ENCODE measurements at regions of chr4 and their contacts with region 1.

Region 1: GRCh38 chr4:169810325-169811323 is 52.9 kb upstream of the HPF1 start:
- DNase-seq: no peak
- H3K4me3 ChIP-seq: no peak overlapping the region
- H3K27ac ChIP-seq: peak overlapping the region in 1 of 8 donors; percentile 14
- H3K4me1 ChIP-seq: peaks cover 0 to 6% (median 0%) of the 10 kb centered on the region in 6 donors
- H3K27me3 ChIP-seq: no peaks in the 10 kb centered on the region
- CTCF ChIP-seq: peak; percentile 56 to 88 (median 80)
- POLR2A ChIP-seq: no peak

Region 2: DNA sequence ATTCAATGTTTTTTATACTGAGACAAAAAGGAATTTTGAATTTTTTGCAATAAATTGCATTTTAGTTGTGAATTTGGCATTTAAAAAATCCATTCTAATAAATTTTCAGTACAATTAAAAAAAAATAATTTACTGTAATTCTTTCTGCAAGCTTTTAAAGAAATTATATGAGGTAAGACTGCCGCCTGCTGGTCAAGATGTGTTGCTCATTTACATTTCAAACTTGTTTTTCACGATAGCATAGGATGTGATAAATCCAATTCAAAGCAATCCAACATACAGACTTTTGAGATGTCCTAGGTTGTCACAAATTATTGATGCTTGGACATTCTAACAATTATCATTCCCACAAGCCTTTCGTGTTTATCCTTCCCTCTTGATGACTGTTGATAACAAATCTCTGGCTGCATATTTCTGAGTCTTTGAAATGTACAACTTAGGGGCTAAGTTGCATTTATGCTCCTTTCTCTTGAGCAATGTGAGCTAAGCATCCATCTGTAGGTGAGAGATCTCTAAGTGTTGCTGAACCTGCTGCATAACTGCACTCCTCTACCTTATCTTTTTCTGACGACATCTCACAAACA is 237.2 kb after region 1 on chr4:
- intact Hi-C with region 1: loop called (anchors 5 kb)
- DNase-seq: no peak
- H3K4me3 ChIP-seq: no peak overlapping the region
- H3K27ac ChIP-seq: no peak overlapping the region
- H3K4me1 ChIP-seq: no peaks in the 10 kb centered on the region
- H3K27me3 ChIP-seq: peaks cover 0 to 9% (median 0%) of the 10 kb centered on the region in 7 donors
- CTCF ChIP-seq: peak; percentile 39 to 80 (median 72)
- POLR2A ChIP-seq: no peak

Measured in spleen (tissue), 13 donors.